WTC11 (cell line): ENCODE measurements at regions of chr13 and their contacts with region 1.

Region 1: DNA sequence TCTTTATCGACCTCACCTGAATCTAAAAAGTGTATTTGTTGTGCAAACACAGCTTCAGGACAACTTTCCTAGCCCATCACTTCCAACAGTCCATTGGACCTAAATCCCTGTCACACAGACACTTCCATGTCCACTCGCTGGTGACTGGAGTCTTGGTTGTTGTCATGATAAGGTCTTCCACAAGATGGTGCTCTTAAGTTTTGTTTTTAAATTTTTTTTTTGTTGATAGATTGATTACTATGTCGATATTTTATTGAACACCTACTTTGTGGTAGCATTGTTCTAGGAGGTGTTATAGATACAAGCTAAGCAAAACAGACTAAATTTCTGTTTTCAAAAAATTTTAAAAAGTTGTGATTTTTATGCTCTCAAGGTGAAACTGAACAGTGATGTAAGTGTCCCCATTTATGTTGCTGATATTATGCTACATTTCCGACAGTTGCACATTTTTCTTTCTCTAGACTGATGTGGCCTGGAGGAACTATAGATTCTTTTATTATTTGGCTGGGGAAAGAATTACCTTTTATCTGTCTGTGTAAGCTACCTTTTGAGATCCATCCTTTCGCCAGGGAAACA is 8.1 kb upstream of the ERICH6B start:
- DNase-seq: no peak
- ATAC-seq: no peak; the same call in 1 of the 2 replicates
- H3K4me3 Mint-ChIP-seq: no peak overlapping the region
- H3K27ac Mint-ChIP-seq: no peak overlapping the region
- H3K4me1 Mint-ChIP-seq: peaks cover 37% of the 10 kb centered on the region
- H3K27me3 Mint-ChIP-seq: peaks cover 11% of the 10 kb centered on the region; the same call in 1 of the 2 replicates
- CTCF ChIP-seq: no peak

Region 2: DNA sequence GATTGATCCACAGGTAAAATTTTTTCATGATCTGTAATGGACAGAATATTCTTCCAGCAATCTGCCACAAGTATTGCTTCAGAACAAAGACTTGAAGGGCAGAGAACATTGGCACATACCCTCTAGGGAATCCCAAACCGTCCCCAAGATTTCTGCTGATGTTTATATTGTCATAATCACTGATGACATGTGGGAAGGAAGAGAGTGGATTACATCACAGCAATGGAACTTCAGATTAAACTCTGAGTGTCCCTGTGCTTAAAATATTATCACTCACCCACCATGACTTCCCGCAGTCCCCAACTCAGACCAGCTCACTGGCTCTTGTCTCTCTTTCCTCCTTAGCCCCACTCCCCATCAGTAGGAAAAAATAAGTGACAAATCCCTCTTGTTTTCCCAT is 274.2 kb before region 1 on chr13:
- CTCF ChIA-PET with region 1: no interaction called
- POLR2A ChIA-PET with region 1: no interaction called
- DNase-seq: no peak
- ATAC-seq: no peak
- H3K4me3 Mint-ChIP-seq: no peak overlapping the region
- H3K27ac Mint-ChIP-seq: no peak overlapping the region
- H3K4me1 Mint-ChIP-seq: no peaks in the 10 kb centered on the region
- H3K27me3 Mint-ChIP-seq: no peaks in the 10 kb centered on the region
- CTCF ChIP-seq: no peak

Region 3: DNA sequence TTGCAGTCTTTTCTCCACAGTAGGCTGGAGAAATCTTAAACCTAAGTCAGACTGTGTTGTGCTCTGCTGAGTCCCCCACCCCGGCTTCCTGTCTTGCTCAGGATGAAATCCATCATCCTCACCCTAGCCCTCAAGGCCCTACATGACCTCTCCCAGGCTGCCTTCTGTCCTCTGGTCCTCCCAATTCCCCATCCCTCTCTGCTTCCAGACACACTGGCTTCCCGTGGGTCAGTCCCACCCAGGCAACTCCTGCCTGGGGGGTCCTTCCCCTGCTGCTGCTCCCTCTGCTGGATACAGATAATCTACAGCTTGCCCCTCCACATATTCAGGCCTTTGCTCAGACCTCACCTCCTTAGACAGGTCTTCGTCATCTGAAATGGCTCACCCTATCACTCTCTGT is 60.1 kb after region 1 on chr13:
- CTCF ChIA-PET with region 1: interaction called, 22 read pairs
- POLR2A ChIA-PET with region 1: interaction called, 3 read pairs
- DNase-seq: peak; percentile 17
- ATAC-seq: peak; percentile 76
- H3K4me3 Mint-ChIP-seq: no peak overlapping the region
- H3K27ac Mint-ChIP-seq: no peak overlapping the region
- H3K4me1 Mint-ChIP-seq: peaks cover 30% of the 10 kb centered on the region
- H3K27me3 Mint-ChIP-seq: no peaks in the 10 kb centered on the region; the same call in 1 of the 2 replicates
- CTCF ChIP-seq: no peak

Region 4: DNA sequence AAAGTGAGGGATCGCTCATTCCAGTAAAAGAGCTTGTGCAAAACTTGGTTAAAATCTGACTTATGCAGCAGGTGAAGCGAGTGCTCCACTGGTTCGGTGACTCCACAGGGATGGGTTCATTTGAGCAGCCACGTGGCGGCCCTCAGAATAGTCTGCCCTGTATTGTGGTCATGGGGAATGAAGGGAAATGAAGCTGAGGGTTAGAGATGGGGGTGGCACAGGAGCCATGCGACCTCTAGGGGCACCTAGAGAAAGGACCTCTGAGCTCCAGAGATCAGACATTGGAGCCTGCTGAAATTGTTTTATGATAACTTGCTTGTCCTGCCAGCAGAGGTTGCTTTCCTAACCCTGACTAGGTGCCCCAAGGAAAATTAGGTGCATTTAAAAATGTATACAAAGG is 105.2 kb after region 1 on chr13:
- CTCF ChIA-PET with region 1: interaction called, 23 read pairs
- POLR2A ChIA-PET with region 1: no interaction called
- DNase-seq: peak; percentile 57
- ATAC-seq: peak; percentile 100
- H3K4me3 Mint-ChIP-seq: no peak overlapping the region
- H3K27ac Mint-ChIP-seq: 0 out of 2 replicates have a peak overlapping the region, but pooled peaks have one; percentile 60
- H3K4me1 Mint-ChIP-seq: peaks cover 5% of the 10 kb centered on the region
- H3K27me3 Mint-ChIP-seq: peaks cover 7% of the 10 kb centered on the region
- CTCF ChIP-seq: peak; percentile 59; the same call in 1 of the 2 replicates